ENCODE measurements at regions of chr6 and their contacts with region 1.

Region 1: DNA sequence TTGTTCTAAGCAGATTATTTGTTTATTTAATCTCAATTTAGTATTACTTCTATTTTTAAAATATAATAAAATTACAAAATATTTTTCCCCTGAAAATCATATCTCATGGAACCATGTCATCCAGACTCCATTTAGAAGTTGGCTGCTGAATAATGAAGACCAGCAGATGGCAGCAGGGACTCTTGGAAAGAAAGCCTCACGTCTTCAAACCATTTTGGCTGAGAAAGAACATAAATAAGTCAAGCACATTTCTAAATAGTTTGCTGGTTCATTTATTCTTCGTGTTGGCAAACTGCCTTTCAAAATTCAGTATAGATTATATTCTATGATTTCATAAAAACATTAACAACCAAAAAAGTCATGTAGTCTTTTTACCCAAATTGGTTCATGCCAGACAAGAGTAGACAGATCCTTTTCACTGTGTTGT is 71.7 kb downstream of the RCAN2 start:
- DNase-seq: peak; percentile 60
- H3K4me3 ChIP-seq: no peak overlapping the region
- H3K27ac ChIP-seq: no peak overlapping the region
- H3K4me1 ChIP-seq: no peaks in the 10 kb centered on the region
- H3K27me3 ChIP-seq: no peaks in the 10 kb centered on the region
- CTCF ChIP-seq: peak; percentile 71 to 86 (median 76)
- EP300 ChIP-seq: no peak
- POLR2A ChIP-seq: no peak

Region 2: DNA sequence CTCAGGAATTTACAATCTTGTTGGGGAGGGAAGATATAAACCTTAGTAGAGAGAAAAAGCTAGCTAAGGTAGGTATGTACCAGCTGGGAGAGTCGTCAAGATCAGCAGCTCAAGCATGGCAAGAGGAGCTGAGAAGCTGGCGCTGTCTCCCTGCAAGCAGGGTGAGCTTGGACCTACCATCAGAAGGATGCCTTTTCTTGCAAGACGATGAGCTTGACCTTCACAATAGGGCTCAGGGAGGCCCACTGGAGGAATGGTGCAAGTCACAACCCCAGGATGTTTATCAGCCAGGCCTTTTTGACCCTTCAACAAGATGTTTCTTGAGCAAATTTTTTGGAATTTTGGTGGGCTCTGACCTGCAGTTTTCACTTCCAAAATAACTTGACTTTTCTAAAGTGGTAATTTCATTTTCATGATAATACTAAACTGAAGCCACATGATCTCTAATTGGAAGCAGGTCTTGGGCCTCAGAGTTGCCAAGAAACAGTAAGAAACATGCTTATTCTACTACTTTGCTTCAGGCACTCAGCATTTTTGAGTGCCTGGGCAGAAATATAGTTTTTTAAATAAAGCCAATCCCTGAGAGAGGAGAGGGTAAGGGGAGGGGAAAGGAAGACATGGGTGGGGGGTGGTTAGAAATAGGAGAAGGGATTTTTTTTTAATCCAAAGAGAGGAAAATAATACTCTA is 662.0 kb before region 1 on chr6:
- in situ Hi-C with region 1: no loop called
- intact Hi-C with region 1: no loop called
- DNase-seq: no peak
- H3K4me3 ChIP-seq: no peak overlapping the region
- H3K27ac ChIP-seq: no peak overlapping the region
- H3K4me1 ChIP-seq: no peaks in the 10 kb centered on the region
- H3K27me3 ChIP-seq: no peaks in the 10 kb centered on the region
- CTCF ChIP-seq: no peak
- EP300 ChIP-seq: no peak
- POLR2A ChIP-seq: no peak

Region 3: GRCh38 chr6:45930420-45931040 is 489.1 kb before region 1 on chr6:
- in situ Hi-C with region 1: loop called in 1 of 4 experiments (anchors 25 kb)
- intact Hi-C with region 1: no loop called
- DNase-seq: peak; percentile 71
- H3K4me3 ChIP-seq: no peak overlapping the region
- H3K27ac ChIP-seq: peak overlapping the region in 2 of 4 donors; percentile 24 to 30
- H3K4me1 ChIP-seq: peaks cover 0 to 11% (median 0%) of the 10 kb centered on the region in 4 donors
- H3K27me3 ChIP-seq: no peaks in the 10 kb centered on the region
- CTCF ChIP-seq: peak; percentile 94 to 98 (median 95)
- EP300 ChIP-seq: no peak
- POLR2A ChIP-seq: no peak

Region 4: GRCh38 chr6:46221222-46221793 is 198.3 kb before region 1 on chr6:
- in situ Hi-C with region 1: loop called in 1 of 4 experiments (anchors 25 kb)
- intact Hi-C with region 1: loop called (anchors 10 kb)
- DNase-seq: no peak
- H3K4me3 ChIP-seq: no peak overlapping the region
- H3K27ac ChIP-seq: no peak overlapping the region
- H3K4me1 ChIP-seq: peaks cover 0 to 3% (median 0%) of the 10 kb centered on the region in 4 donors
- H3K27me3 ChIP-seq: no peaks in the 10 kb centered on the region
- CTCF ChIP-seq: peak; percentile 70 to 91 (median 82)
- EP300 ChIP-seq: no peak
- POLR2A ChIP-seq: no peak

Region 5: DNA sequence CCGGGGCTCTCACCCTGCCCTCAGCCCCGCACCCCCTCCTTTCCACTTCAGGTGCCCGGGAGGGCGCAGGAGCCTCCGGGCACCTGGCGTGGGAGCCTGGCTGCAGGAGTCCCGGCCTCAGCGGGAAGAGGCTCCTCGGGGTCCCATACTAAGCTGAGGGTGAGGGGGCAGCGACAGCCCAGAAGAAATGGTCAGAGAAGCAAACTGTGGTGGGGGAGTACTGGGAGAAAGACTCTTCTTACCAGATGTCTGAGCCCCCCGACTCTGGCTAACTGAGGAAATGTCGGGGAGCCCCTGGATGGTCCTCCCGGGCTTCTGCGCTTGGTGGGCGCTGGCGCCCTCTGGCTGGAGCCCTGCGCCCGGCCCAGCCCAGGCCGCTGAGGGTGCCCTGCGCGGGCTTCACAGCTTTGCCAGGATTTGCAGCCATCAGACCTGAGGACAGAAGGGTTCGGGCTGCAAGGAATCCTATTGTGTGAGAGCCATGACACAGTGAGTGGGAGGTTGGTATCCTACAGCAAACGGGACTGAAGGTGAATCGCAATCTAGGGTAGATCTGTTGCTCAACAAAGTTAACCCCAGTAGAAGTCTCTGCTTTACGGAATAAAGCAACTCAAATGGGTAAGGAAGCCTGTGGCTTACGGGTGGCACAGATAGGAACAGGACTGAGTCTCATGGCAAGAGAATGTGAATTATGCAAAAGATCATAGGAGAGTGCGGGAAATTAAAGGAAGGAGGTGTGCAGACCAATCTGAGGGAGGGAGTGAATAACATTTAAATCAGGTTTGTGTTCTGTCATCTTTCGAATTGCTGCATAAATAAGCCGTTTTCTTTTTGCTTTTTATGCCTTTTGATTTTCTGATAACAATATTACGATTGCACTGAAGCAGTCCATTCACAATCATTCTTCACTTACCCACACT is 72.3 kb after region 1 on chr6:
- in situ Hi-C with region 1: no loop called
- intact Hi-C with region 1: loop called (anchors 10 kb)
- DNase-seq: peak; percentile 34
- H3K4me3 ChIP-seq: peak overlapping the region; percentile 38 to 86 (median 62)
- H3K27ac ChIP-seq: peak overlapping the region; percentile 67 to 81 (median 72)
- H3K4me1 ChIP-seq: peaks cover 0 to 14% (median 12%) of the 10 kb centered on the region in 4 donors
- H3K27me3 ChIP-seq: peaks cover 45% of the 10 kb centered on the region
- CTCF ChIP-seq: peak in 4 of 5 experiments; percentile 28 to 61 (median 49)
- EP300 ChIP-seq: no peak
- POLR2A ChIP-seq: no peak

Region 6: DNA sequence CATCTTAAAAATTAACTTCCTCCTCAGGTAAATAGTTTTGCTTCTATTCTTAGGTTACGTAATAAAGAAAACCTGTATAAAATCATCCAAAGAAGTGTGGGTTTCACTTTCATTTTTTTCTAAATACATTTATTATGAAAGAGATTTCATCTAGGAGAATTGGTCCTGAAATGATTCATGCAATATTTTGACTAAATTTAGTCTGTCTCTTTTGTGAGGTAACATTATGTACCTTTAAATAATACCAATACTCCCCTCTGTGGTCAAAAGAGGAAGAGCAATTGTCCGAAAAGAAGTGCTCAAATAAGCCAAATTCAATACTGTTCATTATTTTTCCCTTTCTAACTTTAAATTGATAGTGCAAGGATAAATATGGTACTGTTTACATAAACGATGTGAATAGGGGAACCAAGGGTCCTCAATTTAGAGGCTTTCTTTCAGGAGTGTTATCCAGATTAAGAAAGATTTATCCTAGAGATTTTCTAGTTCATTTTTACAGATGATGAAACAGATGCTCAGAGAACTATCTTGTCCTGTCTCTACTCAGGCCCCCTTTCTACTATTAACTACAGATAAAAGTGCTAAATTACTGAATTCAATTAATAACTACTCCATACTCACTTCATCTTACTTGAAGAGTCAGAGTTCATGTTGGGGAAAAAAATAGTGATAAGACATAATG is 206.8 kb after region 1 on chr6:
- in situ Hi-C with region 1: loop called in 3 of 4 experiments (anchors 10 kb)
- intact Hi-C with region 1: no loop called
- DNase-seq: no peak
- H3K4me3 ChIP-seq: no peak overlapping the region
- H3K27ac ChIP-seq: no peak overlapping the region
- H3K4me1 ChIP-seq: peaks cover 0 to 6% (median 2%) of the 10 kb centered on the region in 4 donors
- H3K27me3 ChIP-seq: no peaks in the 10 kb centered on the region
- CTCF ChIP-seq: peak; percentile 52 to 66 (median 60)
- EP300 ChIP-seq: no peak
- POLR2A ChIP-seq: no peak

Measured in transverse colon (tissue), 4 donors.